PC-3 (cell line): ENCODE measurements at regions of chr3 and their contacts with region 1.

Region 1: GRCh38 chr3:22175947-22176346 is 424.9 kb upstream of the ZNF385D start:
- DNase-seq: peak; percentile 44
- ATAC-seq: peak; percentile 46; the same call in 1 of the 2 replicates
- H3K4me3 ChIP-seq: no peak overlapping the region
- H3K27ac ChIP-seq: no peak overlapping the region
- H3K4me1 ChIP-seq: no peaks in the 10 kb centered on the region
- H3K27me3 ChIP-seq: no peaks in the 10 kb centered on the region
- CTCF ChIP-seq: peak; percentile 56

Region 2: GRCh38 chr3:21779909-21780308 is 396.0 kb before region 1 on chr3:
- CTCF ChIA-PET with region 1: no interaction called
- POLR2A ChIA-PET with region 1: no interaction called
- intact Hi-C with region 1: no loop called
- DNase-seq: no peak
- ATAC-seq: no peak
- H3K4me3 ChIP-seq: no peak overlapping the region
- H3K27ac ChIP-seq: no peak overlapping the region
- H3K4me1 ChIP-seq: peaks cover 20% of the 10 kb centered on the region
- H3K27me3 ChIP-seq: no peaks in the 10 kb centered on the region
- CTCF ChIP-seq: no peak

Region 3: DNA sequence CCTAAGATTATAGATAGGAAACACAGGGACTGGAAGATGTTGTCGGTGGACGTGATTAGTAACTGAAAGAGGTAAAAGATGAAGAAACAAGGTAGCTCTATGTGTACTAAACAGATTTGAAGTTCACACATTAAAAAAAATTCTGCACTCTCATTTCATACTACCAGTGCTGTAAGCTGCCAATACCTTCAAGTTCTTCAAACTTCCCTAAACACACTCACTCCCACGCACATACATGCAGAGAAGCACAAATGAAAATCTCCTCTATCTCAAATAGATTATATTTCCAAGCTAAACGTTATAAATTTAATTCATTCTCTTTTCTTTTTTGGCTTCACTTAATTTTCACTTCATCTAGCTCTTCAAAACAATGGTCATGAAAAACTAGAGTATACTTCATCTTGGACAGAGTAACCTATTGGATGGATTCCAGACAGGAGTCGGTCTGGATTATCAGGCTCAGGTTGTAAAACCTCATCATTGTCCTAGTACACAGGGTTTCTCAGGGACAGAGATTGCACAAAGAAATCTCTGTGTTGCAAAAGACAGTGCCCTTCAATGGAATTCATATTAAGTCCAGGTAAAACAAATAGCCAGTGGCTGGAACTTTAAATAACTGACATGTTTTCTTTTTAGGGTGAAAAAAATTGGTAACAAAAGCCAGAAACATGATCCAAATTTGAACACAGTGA is 16.8 kb before region 1 on chr3:
- CTCF ChIA-PET with region 1: interaction called, 5 read pairs
- POLR2A ChIA-PET with region 1: no interaction called
- intact Hi-C with region 1: loop called (anchors 1 kb)
- DNase-seq: peak; percentile 89
- ATAC-seq: peak; percentile 85
- H3K4me3 ChIP-seq: no peak overlapping the region
- H3K27ac ChIP-seq: peak overlapping the region; percentile 27
- H3K4me1 ChIP-seq: peaks cover 46% of the 10 kb centered on the region
- H3K27me3 ChIP-seq: no peaks in the 10 kb centered on the region
- CTCF ChIP-seq: no peak

Region 4: GRCh38 chr3:22491343-22491742 is 315.4 kb after region 1 on chr3:
- CTCF ChIA-PET with region 1: interaction called, 3 read pairs
- POLR2A ChIA-PET with region 1: no interaction called
- intact Hi-C with region 1: loop called (anchors 5 kb)
- DNase-seq: peak; percentile 86
- ATAC-seq: peak; percentile 96
- H3K4me3 ChIP-seq: no peak overlapping the region
- H3K27ac ChIP-seq: peak overlapping the region; percentile 71
- H3K4me1 ChIP-seq: peaks cover 30% of the 10 kb centered on the region
- H3K27me3 ChIP-seq: no peaks in the 10 kb centered on the region
- CTCF ChIP-seq: no peak

Region 5: GRCh38 chr3:22671848-22672247 is 495.9 kb after region 1 on chr3:
- CTCF ChIA-PET with region 1: no interaction called
- POLR2A ChIA-PET with region 1: no interaction called
- intact Hi-C with region 1: loop called (anchors 1 kb)
- DNase-seq: peak; percentile 33
- ATAC-seq: peak; percentile 35; the same call in 1 of the 2 replicates
- H3K4me3 ChIP-seq: no peak overlapping the region
- H3K27ac ChIP-seq: no peak overlapping the region
- H3K4me1 ChIP-seq: no peaks in the 10 kb centered on the region
- H3K27me3 ChIP-seq: no peaks in the 10 kb centered on the region
- CTCF ChIP-seq: peak; percentile 65

Region 6: GRCh38 chr3:22887664-22888291 is 711.8 kb after region 1 on chr3:
- CTCF ChIA-PET with region 1: interaction called, 3 read pairs
- POLR2A ChIA-PET with region 1: no interaction called
- intact Hi-C with region 1: loop called (anchors 2 kb)
- DNase-seq: peak; percentile 59
- ATAC-seq: peak; percentile 70
- H3K4me3 ChIP-seq: no peak overlapping the region
- H3K27ac ChIP-seq: no peak overlapping the region
- H3K4me1 ChIP-seq: peaks cover 10% of the 10 kb centered on the region
- H3K27me3 ChIP-seq: peaks cover 22% of the 10 kb centered on the region
- CTCF ChIP-seq: peak; percentile 90